ENCODE measurements at regions of chr5 and their contacts with region 1.

Region 1: DNA sequence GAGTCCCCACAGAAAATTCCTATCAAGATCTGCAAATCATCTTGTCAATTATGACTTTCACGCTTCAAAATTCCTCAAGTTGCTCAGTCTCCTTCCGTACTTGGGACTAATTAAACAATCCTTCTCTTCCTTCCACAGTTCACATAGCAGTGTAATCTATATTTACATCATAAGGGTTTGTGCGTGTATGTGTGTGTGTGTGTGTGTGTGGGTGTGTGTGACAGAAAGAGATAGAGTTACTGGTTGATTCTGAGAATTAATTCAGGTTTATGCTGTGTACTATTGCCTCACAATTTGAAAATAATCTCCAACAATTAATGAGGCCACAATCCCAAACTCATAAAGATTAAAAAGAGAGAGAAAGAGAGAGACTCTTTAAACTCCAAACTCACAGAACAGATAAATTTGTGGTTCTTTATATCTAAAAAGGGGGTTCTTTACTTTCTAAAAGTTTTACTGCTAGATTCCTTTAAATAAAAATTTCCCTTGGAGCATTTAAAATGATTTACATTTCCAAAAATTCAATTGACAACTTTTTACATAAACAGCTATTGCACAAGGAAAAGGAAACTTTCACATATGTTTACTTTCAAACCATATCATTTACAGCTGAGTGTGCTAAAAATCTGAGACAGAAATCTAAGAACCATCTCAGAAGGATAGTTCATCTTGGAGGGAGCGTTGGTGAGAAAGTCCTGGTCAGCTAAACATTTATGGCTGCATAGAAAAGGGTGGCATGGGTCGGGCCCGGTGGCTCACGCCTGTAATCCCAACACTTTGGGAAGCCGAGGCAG is 235.6 kb downstream of the DTWD2 start:
- DNase-seq: no peak
- H3K4me3 ChIP-seq: no peak overlapping the region
- H3K27ac ChIP-seq: no peak overlapping the region
- H3K4me1 ChIP-seq: no peaks in the 10 kb centered on the region
- H3K27me3 ChIP-seq: no peaks in the 10 kb centered on the region
- CTCF ChIP-seq: no peak
- POLR2A ChIP-seq: no peak

Region 2: DNA sequence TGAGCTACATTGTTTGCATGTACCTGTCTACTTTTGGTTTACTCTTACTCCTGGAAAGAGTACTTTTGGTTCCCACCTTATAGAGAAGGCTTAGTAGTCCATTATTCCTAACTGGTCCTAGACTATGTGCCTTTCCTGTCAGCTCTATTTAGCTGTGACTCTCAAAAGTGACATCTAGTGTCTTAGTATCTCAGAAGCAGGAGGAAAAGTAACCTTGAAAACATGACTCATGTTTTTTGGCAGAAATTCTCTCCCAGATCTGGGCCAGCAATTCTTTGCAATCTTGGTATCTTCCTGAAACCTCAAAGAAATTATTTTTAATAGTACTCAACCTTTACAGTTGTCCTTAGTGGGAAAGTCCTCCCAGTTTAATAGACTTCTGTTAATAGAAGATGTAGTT is 1486.5 kb before region 1 on chr5:
- intact Hi-C with region 1: no loop called
- DNase-seq: no peak
- H3K4me3 ChIP-seq: no peak overlapping the region
- H3K27ac ChIP-seq: no peak overlapping the region
- H3K4me1 ChIP-seq: peaks cover 0 to 4% of the 10 kb centered on the region in 2 donors
- H3K27me3 ChIP-seq: no peaks in the 10 kb centered on the region
- CTCF ChIP-seq: no peak
- POLR2A ChIP-seq: no peak

Region 3: DNA sequence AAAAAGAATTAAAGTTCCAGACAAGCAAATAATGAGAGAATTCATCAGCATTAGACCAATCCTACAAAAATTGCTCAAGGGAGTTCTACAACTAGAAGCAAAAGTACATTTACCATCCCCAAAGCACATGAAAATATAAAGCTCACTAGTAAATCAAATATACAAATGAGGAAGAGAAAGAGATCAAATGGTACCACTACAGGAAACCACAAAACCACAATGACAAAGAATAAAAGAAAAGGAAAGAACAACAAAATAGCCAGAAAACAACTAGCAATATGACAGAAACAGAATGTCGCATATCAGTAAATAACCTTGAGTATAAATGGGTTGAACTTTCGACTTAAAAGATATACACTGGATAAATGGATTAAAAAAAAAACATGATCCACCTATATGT is 503.4 kb before region 1 on chr5:
- intact Hi-C with region 1: loop called (anchors 5 kb)
- DNase-seq: no peak
- H3K4me3 ChIP-seq: no peak overlapping the region
- H3K27ac ChIP-seq: no peak overlapping the region
- H3K4me1 ChIP-seq: no peaks in the 10 kb centered on the region
- H3K27me3 ChIP-seq: no peaks in the 10 kb centered on the region
- CTCF ChIP-seq: no peak
- POLR2A ChIP-seq: no peak